Uterus (tissue), 4 donors: ENCODE measurements at regions of chr3 and their contacts with region 1.

Region 1: GRCh38 chr3:123652346-123652984 is 67.6 kb upstream of the HACD2 start:
- DNase-seq: peak; percentile 86
- H3K4me3 ChIP-seq: no peak overlapping the region
- H3K27ac ChIP-seq: peak overlapping the region; percentile 93 to 96
- H3K4me1 ChIP-seq: peaks cover 19 to 24% of the 10 kb centered on the region in 2 donors
- H3K27me3 ChIP-seq: no peaks in the 10 kb centered on the region
- CTCF ChIP-seq: peak; percentile 89 to 95 (median 92)
- POLR2A ChIP-seq: no peak

Region 2: DNA sequence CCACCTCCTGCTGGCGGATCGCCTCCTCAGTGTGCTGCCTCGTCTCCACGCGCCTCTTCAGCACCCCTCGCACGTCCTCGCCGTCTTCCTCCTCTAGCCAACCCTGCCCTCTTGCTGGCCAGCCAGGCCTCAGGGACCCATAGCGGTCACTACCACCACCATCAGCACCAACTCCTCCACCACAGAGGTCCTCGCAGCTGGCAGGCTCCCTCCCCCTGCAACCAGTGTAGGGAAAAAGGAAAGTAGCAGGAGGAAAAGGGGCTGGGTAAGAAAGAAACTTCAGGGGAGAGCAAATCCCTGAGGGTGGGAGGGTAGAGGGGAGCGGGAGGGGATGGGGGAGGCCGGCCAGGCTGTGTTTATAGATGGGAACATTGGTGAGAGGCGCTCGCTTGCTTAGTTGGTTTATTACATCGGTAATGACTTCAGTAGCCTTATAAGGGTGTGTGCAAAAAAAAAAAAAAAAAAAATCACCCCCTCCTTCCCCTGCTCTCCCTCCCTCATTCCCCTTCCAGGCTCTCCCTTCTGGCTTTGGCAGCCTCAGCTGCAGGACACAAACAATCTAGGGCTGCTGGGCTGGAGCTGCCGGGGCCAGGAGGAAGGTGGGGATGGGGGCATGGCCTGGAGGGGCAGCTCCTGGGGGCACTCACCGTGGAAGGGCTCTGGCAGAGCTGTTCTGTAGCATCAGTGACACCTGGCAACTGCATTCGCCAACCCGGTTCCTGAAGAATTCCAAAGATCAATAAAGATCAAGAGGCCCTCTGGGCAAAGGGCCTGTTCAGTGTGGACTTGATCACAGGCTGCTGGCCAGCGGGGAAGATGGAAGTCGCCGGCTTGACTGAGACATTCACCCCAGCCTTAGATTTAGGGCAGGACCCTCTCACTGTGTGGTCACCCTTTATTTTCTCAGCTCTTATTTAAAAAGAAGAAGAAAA is 48.6 kb after region 1 on chr3:
- intact Hi-C with region 1: loop called (anchors 5 kb)
- DNase-seq: peak; percentile 81 to 93
- H3K4me3 ChIP-seq: peak overlapping the region; percentile 58 to 78
- H3K27ac ChIP-seq: peak overlapping the region; percentile 90 to 96
- H3K4me1 ChIP-seq: peaks cover 0 to 3% of the 10 kb centered on the region in 2 donors
- H3K27me3 ChIP-seq: no peaks in the 10 kb centered on the region
- CTCF ChIP-seq: peak in 1 of 4 experiments; percentile 26
- POLR2A ChIP-seq: peak; percentile 52 to 70

Region 3: GRCh38 chr3:123723522-123724168 is 71.2 kb after region 1 on chr3:
- intact Hi-C with region 1: loop called (anchors 5 kb)
- DNase-seq: peak; percentile 63 to 75
- H3K4me3 ChIP-seq: no peak overlapping the region
- H3K27ac ChIP-seq: peak overlapping the region in 1 of 2 donors; percentile 68
- H3K4me1 ChIP-seq: peaks cover 0 to 17% of the 10 kb centered on the region in 2 donors
- H3K27me3 ChIP-seq: no peaks in the 10 kb centered on the region
- CTCF ChIP-seq: peak; percentile 81 to 89 (median 82)
- POLR2A ChIP-seq: no peak